ENCODE measurements at regions of chr12 and their contacts with region 1.

Region 1: DNA sequence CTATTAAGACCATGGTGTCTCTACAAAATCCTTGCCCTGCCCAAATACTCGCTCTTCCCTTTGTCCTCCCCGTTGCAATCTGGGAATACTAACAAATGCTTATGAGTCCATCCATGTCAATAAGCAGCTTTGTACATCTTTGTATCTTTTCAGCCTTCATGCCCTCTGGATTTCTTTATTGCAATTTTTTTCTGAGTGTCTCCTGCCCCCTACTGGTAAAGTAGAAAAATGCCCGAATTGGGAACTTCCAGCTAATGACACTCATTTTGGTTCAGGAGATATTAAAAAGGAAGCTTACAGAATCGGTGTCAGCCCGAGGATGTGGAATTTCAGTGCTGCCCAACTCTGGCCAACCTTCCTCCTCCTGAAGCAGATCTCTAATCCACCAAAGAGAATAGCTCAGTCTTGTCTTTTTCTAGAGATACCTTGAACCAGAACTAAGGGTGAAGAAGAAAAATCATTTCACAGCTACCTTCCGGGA is 46.0 kb downstream of the SH2B3 start:
- DNase-seq: peak in 1 of 2 experiments; percentile 41
- H3K4me3 ChIP-seq: no peak overlapping the region
- H3K27ac ChIP-seq: no peak overlapping the region
- H3K4me1 ChIP-seq: no peaks in the 10 kb centered on the region
- H3K27me3 ChIP-seq: no peaks in the 10 kb centered on the region
- CTCF ChIP-seq: peak in 2 of 3 experiments; percentile 56 to 65; a peak in 3 of 4 replicates
- EP300 ChIP-seq: no peak
- POLR2A ChIP-seq: no peak
- RAD21 ChIP-seq: peak; percentile 75 to 81

Region 2: GRCh38 chr12:111298582-111299436 is 152.9 kb before region 1 on chr12:
- CTCF ChIA-PET with region 1: no interaction called
- POLR2A ChIA-PET with region 1: no interaction called
- DNase-seq: peak; percentile 41 to 87
- H3K4me3 ChIP-seq: no peak overlapping the region
- H3K27ac ChIP-seq: 0 out of 2 replicates have a peak overlapping the region, but pooled peaks have one; percentile 34
- H3K4me1 ChIP-seq: peaks cover 0 to 7% (median 6%) of the 10 kb centered on the region in 4 experiments; a peak in 6 of 7 replicates
- H3K27me3 ChIP-seq: no peaks in the 10 kb centered on the region
- CTCF ChIP-seq: peak; percentile 91 to 99 (median 95)
- EP300 ChIP-seq: no peak
- POLR2A ChIP-seq: no peak
- RAD21 ChIP-seq: peak; percentile 67 to 79

Region 3: DNA sequence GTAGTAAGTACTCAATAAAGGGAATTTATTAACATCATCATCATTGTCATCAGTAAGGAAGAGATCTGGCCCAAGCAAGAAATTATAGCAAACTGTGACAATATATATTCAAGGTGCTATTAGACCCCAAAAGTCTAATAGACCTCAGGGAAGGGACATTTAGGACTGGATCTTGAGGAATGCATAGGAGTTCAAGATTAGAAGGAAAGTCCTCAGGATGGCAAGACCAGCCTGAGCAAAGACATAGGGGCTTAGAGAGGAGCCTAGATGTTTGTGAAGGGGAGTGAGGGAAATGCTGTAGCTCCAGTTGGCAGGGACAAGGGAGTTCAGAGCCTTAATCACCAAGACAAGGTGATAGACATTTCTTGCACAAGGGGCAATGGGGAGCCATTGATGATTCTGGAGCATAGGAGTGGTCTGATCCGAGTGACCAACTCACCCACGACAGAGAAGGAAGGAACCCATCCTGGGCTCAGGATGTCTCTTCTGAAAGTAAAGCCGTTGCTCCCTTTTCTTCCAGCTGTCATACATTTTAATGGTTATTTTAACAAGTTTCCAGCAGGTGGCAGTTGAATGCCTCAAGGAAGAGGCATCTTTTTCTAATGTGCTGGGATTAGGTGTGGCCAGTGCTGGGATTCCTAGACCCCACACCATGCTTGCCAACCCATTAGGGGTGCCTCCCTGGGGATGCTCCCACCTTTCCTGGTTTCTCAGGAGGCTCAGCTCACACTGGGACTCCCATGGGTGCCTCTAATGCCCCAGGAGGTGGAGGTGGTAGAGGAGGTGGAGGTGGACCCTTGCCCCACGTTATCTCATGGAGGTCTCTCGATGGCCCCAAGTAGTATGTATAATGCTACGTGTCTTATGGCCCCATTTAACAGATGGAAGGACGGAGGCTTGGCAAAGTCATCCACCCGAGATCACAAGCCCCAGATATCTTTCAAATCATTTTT is 120.6 kb before region 1 on chr12:
- CTCF ChIA-PET with region 1: interaction called, 14 read pairs
- POLR2A ChIA-PET with region 1: no interaction called
- DNase-seq: no peak
- H3K4me3 ChIP-seq: no peak overlapping the region
- H3K27ac ChIP-seq: no peak overlapping the region
- H3K4me1 ChIP-seq: peaks cover 0 to 2% (median 0%) of the 10 kb centered on the region in 4 experiments; a peak in 1 of 7 replicates
- H3K27me3 ChIP-seq: no peaks in the 10 kb centered on the region
- CTCF ChIP-seq: peak in 2 of 3 experiments; percentile 53 to 59; a peak in 3 of 4 replicates
- EP300 ChIP-seq: no peak
- POLR2A ChIP-seq: no peak
- RAD21 ChIP-seq: peak; percentile 60 to 71

Region 4: GRCh38 chr12:111405149-111405860 is 46.4 kb before region 1 on chr12:
- CTCF ChIA-PET with region 1: interaction called, 838 read pairs
- POLR2A ChIA-PET with region 1: interaction called, 64 read pairs
- DNase-seq: peak; percentile 100
- H3K4me3 ChIP-seq: peak overlapping the region; percentile 54 to 93 (median 75)
- H3K27ac ChIP-seq: peak overlapping the region; percentile 87
- H3K4me1 ChIP-seq: peaks cover 5 to 48% (median 31%) of the 10 kb centered on the region in 4 experiments
- H3K27me3 ChIP-seq: no peaks in the 10 kb centered on the region
- CTCF ChIP-seq: peak; percentile 63 to 67 (median 66)
- EP300 ChIP-seq: no peak
- POLR2A ChIP-seq: peak in 1 of 2 experiments; percentile 71; a peak in 2 of 3 replicates
- RAD21 ChIP-seq: peak in 1 of 2 experiments; percentile 14; a peak in 2 of 4 replicates

Region 5: DNA sequence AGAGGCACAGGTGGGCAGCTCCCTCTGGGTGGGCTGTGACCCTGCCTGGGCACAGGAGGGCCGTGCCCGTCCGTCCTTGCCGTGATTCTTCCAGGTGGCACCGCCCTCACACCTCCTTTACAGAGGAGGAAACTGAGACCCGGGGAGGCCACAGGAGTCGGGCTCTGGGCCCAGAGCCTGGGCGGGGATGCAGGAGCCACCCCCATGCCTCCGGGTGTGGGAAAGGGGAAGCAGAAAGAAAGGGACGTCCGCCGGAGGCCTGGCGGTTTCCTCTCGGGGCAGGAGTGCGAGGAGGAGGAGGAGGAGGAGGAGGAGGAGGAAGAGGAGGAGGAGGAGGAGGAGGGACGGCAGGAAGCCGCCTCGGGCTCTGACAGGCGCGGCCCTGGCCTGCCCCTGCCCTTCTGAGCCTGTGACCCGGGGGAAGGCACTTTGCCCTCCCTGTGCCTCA is 22.9 kb before region 1 on chr12:
- CTCF ChIA-PET with region 1: interaction called, 189 read pairs
- POLR2A ChIA-PET with region 1: interaction called, 26 read pairs
- DNase-seq: no peak
- H3K4me3 ChIP-seq: no peak overlapping the region
- H3K27ac ChIP-seq: no peak overlapping the region
- H3K4me1 ChIP-seq: peaks cover 4 to 33% (median 20%) of the 10 kb centered on the region in 4 experiments
- H3K27me3 ChIP-seq: no peaks in the 10 kb centered on the region; a peak in 1 of 7 replicates
- CTCF ChIP-seq: no peak
- EP300 ChIP-seq: no peak
- POLR2A ChIP-seq: no peak
- RAD21 ChIP-seq: no peak

Region 6: DNA sequence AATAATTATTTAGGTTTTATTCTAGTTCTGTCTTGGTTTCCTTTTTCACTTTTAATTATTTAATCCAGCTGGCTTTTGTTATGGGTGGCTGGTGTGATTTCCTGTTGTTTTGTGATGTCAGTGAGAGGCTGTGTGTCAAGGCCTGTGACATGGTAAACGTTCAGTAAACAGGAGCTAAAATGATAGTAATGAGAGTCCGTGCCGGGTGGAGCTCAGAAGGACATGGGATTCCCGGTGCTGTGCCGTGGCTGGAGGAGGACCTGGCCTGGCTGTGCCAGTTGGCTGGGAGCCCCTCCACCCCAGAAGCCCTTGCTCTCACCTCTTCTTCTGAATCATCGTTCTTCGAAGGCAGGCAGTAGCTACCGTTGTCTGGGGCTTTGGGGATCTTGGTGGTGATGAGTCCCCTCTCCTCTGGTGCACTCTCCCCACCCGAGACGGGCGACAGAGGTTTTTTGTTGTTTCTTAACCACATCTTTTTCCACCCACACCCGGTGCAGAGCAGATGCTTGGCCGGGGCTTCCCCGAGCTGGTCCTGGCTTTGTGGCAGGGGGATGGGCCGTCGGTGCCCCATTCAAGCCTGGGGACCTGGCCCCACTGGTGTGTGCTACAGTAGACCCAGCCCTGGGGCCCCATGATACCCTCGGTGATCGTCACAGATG is 16.9 kb before region 1 on chr12:
- CTCF ChIA-PET with region 1: interaction called, 80 read pairs
- POLR2A ChIA-PET with region 1: interaction called, 26 read pairs
- DNase-seq: no peak
- H3K4me3 ChIP-seq: no peak overlapping the region
- H3K27ac ChIP-seq: peak overlapping the region; percentile 32; the same call in 1 of the 2 replicates
- H3K4me1 ChIP-seq: peaks cover 4 to 49% (median 35%) of the 10 kb centered on the region in 4 experiments
- H3K27me3 ChIP-seq: no peaks in the 10 kb centered on the region
- CTCF ChIP-seq: no peak
- EP300 ChIP-seq: no peak
- POLR2A ChIP-seq: no peak
- RAD21 ChIP-seq: no peak

Region 7: DNA sequence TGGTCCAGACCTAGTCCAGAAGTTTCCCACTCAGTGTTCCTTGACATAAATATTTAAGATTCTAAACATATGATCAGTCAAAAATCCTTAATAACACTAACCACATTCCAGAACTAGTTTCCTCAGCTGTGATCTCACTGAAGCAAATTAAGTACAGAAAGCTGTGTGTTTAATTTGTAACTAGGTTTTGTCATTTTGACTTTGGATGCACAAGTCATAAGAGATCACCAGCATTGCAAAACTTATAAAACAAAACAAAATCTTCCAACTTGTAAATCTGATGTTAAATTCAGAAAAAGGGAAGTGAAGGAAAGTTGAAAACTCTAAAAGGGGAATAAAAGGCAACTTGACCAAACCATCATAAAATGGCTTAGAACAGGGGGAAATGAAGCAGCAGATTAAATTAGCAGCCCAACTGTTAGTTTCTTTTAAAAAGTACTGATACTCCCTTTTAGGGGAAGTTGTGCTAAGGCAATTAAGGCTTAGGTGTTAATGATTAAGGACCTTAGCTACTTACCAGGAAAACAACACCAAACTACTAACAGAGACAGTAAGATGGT is 10.6 kb after region 1 on chr12:
- CTCF ChIA-PET with region 1: interaction called, 24 read pairs
- POLR2A ChIA-PET with region 1: interaction called, 5 read pairs
- DNase-seq: no peak
- H3K4me3 ChIP-seq: no peak overlapping the region
- H3K27ac ChIP-seq: no peak overlapping the region
- H3K4me1 ChIP-seq: no peaks in the 10 kb centered on the region
- H3K27me3 ChIP-seq: no peaks in the 10 kb centered on the region
- CTCF ChIP-seq: no peak
- EP300 ChIP-seq: no peak
- POLR2A ChIP-seq: no peak
- RAD21 ChIP-seq: no peak

Region 8: GRCh38 chr12:111482462-111482861 is 30.8 kb after region 1 on chr12:
- CTCF ChIA-PET with region 1: interaction called, 10 read pairs
- POLR2A ChIA-PET with region 1: no interaction called
- DNase-seq: no peak
- H3K4me3 ChIP-seq: no peak overlapping the region
- H3K27ac ChIP-seq: no peak overlapping the region
- H3K4me1 ChIP-seq: no peaks in the 10 kb centered on the region
- H3K27me3 ChIP-seq: no peaks in the 10 kb centered on the region
- CTCF ChIP-seq: peak in 1 of 3 experiments; percentile 28; a peak in 1 of 4 replicates
- EP300 ChIP-seq: no peak
- POLR2A ChIP-seq: no peak
- RAD21 ChIP-seq: no peak

Region 9: GRCh38 chr12:111636209-111636945 is 184.7 kb after region 1 on chr12:
- CTCF ChIA-PET with region 1: no interaction called
- POLR2A ChIA-PET with region 1: no interaction called
- DNase-seq: peak; percentile 13 to 58
- H3K4me3 ChIP-seq: no peak overlapping the region; a peak in 1 of 8 replicates
- H3K27ac ChIP-seq: peak overlapping the region; percentile 63; the same call in 1 of the 2 replicates
- H3K4me1 ChIP-seq: peaks cover 5 to 16% (median 11%) of the 10 kb centered on the region in 4 experiments
- H3K27me3 ChIP-seq: no peaks in the 10 kb centered on the region; a peak in 1 of 7 replicates
- CTCF ChIP-seq: no peak
- EP300 ChIP-seq: no peak
- POLR2A ChIP-seq: peak in 1 of 2 experiments; percentile 41; a peak in 1 of 3 replicates
- RAD21 ChIP-seq: no peak; a peak in 1 of 4 replicates